CD8-positive, alpha-beta T cell (primary cell): ENCODE measurements at regions of chr17 and their contacts with region 1.

Region 1: DNA sequence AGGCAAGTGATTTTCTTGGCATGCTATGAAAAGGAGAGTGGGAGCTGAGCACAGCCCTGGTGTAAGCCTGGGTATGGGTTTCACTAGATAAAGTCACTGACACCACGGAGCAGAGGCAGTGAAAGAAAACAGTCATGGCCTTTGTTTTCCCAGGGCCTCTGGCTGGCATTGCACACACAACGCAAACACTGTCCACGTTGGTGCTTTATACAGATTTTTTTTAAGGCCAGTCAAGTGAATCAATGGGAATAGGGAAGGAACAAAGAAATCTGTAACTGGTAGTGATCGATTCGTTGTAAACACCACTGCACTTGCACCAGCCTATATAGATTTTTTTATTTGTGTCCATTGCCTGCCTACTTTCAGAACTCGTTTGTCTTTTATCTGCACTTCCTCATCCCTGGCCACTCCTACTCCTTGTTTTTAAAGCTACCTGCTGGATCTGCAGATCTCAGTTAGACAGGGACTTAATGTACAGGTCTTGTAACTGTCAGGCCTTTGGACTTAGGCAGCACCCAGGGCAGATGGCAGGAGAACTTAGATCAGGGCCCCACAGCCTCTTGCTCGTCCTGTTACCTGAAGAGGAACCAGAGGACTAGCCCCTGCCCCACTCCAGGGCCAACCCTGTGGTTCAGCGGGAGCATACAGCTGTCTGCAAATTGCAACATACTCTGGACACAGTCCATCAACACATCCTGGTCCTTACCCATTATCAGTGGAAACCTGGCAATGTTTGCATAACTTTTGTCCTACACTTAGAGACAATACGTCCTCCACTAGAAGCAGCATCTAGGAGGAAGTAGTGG is 10.6 kb upstream of the TMIGD1 start:
- DNase-seq: no peak
- ATAC-seq: no peak
- H3K4me3 ChIP-seq: no peak overlapping the region
- H3K4me3 Mint-ChIP-seq: no peak overlapping the region
- H3K27ac ChIP-seq: no peak overlapping the region
- H3K27ac Mint-ChIP-seq: no peak overlapping the region
- H3K4me1 ChIP-seq: peaks cover 8% of the 10 kb centered on the region
- H3K4me1 Mint-ChIP-seq: peaks cover 9% of the 10 kb centered on the region
- H3K27me3 ChIP-seq: no peaks in the 10 kb centered on the region
- H3K27me3 Mint-ChIP-seq: no peaks in the 10 kb centered on the region
- CTCF ChIP-seq: no peak

Region 2: GRCh38 chr17:29909236-29910003 is 435.1 kb before region 1 on chr17:
- CTCF ChIA-PET with region 1: no interaction called
- POLR2A ChIA-PET with region 1: no interaction called
- intact Hi-C with region 1: no loop called
- DNase-seq: no peak
- ATAC-seq: peak; percentile 73
- H3K4me3 ChIP-seq: no peak overlapping the region
- H3K4me3 Mint-ChIP-seq: no peak overlapping the region
- H3K27ac ChIP-seq: no peak overlapping the region
- H3K27ac Mint-ChIP-seq: no peak overlapping the region
- H3K4me1 ChIP-seq: peaks cover 4% of the 10 kb centered on the region
- H3K4me1 Mint-ChIP-seq: peaks cover 27% of the 10 kb centered on the region
- H3K27me3 ChIP-seq: no peaks in the 10 kb centered on the region
- H3K27me3 Mint-ChIP-seq: no peaks in the 10 kb centered on the region
- CTCF ChIP-seq: no peak

Region 3: GRCh38 chr17:30062372-30062771 is 282.1 kb before region 1 on chr17:
- CTCF ChIA-PET with region 1: no interaction called
- POLR2A ChIA-PET with region 1: no interaction called
- intact Hi-C with region 1: no loop called
- DNase-seq: no peak
- ATAC-seq: no peak
- H3K4me3 ChIP-seq: no peak overlapping the region
- H3K4me3 Mint-ChIP-seq: no peak overlapping the region
- H3K27ac ChIP-seq: no peak overlapping the region
- H3K27ac Mint-ChIP-seq: no peak overlapping the region
- H3K4me1 ChIP-seq: no peaks in the 10 kb centered on the region
- H3K4me1 Mint-ChIP-seq: no peaks in the 10 kb centered on the region
- H3K27me3 ChIP-seq: peaks cover 0 to 4% of the 10 kb centered on the region in 2 experiments
- H3K27me3 Mint-ChIP-seq: peaks cover 9% of the 10 kb centered on the region
- CTCF ChIP-seq: no peak

Region 4: GRCh38 chr17:30309591-30309990 is 34.9 kb before region 1 on chr17:
- CTCF ChIA-PET with region 1: no interaction called
- POLR2A ChIA-PET with region 1: no interaction called
- intact Hi-C with region 1: no loop called
- DNase-seq: no peak
- ATAC-seq: no peak
- H3K4me3 ChIP-seq: no peak overlapping the region
- H3K4me3 Mint-ChIP-seq: no peak overlapping the region
- H3K27ac ChIP-seq: no peak overlapping the region
- H3K27ac Mint-ChIP-seq: no peak overlapping the region
- H3K4me1 ChIP-seq: no peaks in the 10 kb centered on the region
- H3K4me1 Mint-ChIP-seq: no peaks in the 10 kb centered on the region
- H3K27me3 ChIP-seq: no peaks in the 10 kb centered on the region
- H3K27me3 Mint-ChIP-seq: no peaks in the 10 kb centered on the region
- CTCF ChIP-seq: no peak

Region 5: GRCh38 chr17:30323895-30324319 is 20.6 kb before region 1 on chr17:
- CTCF ChIA-PET with region 1: interaction called, 21 read pairs
- POLR2A ChIA-PET with region 1: no interaction called
- intact Hi-C with region 1: no loop called
- DNase-seq: peak in 8 of 9 experiments; percentile 12 to 66 (median 46)
- ATAC-seq: peak; percentile 63
- H3K4me3 ChIP-seq: no peak overlapping the region
- H3K4me3 Mint-ChIP-seq: peak overlapping the region; percentile 11
- H3K27ac ChIP-seq: peak overlapping the region; percentile 0 to 60
- H3K27ac Mint-ChIP-seq: peak overlapping the region; percentile 91
- H3K4me1 ChIP-seq: peaks cover 24% of the 10 kb centered on the region
- H3K4me1 Mint-ChIP-seq: peaks cover 30% of the 10 kb centered on the region
- H3K27me3 ChIP-seq: no peaks in the 10 kb centered on the region
- H3K27me3 Mint-ChIP-seq: no peaks in the 10 kb centered on the region
- CTCF ChIP-seq: no peak

Region 6: DNA sequence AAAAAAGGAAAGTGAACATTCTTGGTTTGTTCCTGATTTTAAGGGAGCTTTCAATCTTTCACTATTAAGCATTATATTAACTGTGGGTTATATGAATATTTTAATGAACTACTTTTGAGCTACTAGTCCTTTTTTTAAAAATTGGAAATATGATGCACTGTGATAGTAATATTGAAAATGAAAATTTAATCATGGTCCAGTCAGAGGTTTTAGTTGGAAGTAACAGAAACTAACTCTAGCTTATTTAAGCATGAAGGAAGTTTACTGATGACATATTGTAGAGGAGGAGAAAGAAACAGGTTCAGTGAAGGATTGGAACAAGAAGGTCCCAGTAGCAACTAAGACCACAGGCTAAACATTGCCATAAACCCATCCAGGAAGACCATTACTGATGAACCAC is 10.2 kb after region 1 on chr17:
- CTCF ChIA-PET with region 1: interaction called, 12 read pairs
- POLR2A ChIA-PET with region 1: interaction called, 3 read pairs
- intact Hi-C with region 1: no loop called
- DNase-seq: no peak
- ATAC-seq: no peak
- H3K4me3 ChIP-seq: no peak overlapping the region
- H3K4me3 Mint-ChIP-seq: no peak overlapping the region
- H3K27ac ChIP-seq: no peak overlapping the region
- H3K27ac Mint-ChIP-seq: no peak overlapping the region
- H3K4me1 ChIP-seq: no peaks in the 10 kb centered on the region
- H3K4me1 Mint-ChIP-seq: no peaks in the 10 kb centered on the region
- H3K27me3 ChIP-seq: no peaks in the 10 kb centered on the region
- H3K27me3 Mint-ChIP-seq: no peaks in the 10 kb centered on the region
- CTCF ChIP-seq: no peak

Region 7: GRCh38 chr17:30363715-30364202 is 19.3 kb after region 1 on chr17:
- CTCF ChIA-PET with region 1: interaction called, 12 read pairs
- POLR2A ChIA-PET with region 1: interaction called, 3 read pairs
- intact Hi-C with region 1: no loop called
- DNase-seq: peak; percentile 43 to 95 (median 74)
- ATAC-seq: peak; percentile 84
- H3K4me3 ChIP-seq: no peak overlapping the region
- H3K4me3 Mint-ChIP-seq: peak overlapping the region; percentile 52
- H3K27ac ChIP-seq: peak overlapping the region in 1 of 2 experiments; percentile 52
- H3K27ac Mint-ChIP-seq: peak overlapping the region; percentile 70
- H3K4me1 ChIP-seq: peaks cover 27% of the 10 kb centered on the region
- H3K4me1 Mint-ChIP-seq: peaks cover 37% of the 10 kb centered on the region
- H3K27me3 ChIP-seq: no peaks in the 10 kb centered on the region
- H3K27me3 Mint-ChIP-seq: no peaks in the 10 kb centered on the region
- CTCF ChIP-seq: no peak

Region 8: DNA sequence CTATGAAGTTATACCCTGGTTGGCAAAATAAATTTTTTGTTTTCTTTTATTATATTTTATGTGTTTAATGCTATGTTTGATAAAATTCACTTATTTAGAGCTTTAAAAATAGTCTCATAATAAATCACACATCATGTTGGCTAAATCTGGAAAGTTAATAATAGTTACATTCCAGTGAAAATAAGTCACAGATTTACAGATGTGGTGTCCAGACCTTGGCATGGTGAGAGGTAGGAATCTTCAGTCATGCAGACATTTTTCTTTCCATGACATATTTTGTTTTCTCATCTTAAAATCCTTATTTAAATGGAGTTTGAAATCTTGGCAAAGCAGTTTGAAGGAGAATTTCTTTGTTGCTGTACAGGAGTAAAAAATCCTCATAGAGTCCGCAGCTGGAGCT is 84.7 kb after region 1 on chr17:
- CTCF ChIA-PET with region 1: interaction called, 5 read pairs
- POLR2A ChIA-PET with region 1: no interaction called
- intact Hi-C with region 1: loop called in 1 of 2 experiments (anchors 10 kb)
- DNase-seq: no peak
- ATAC-seq: no peak
- H3K4me3 ChIP-seq: no peak overlapping the region
- H3K4me3 Mint-ChIP-seq: no peak overlapping the region
- H3K27ac ChIP-seq: no peak overlapping the region
- H3K27ac Mint-ChIP-seq: no peak overlapping the region
- H3K4me1 ChIP-seq: no peaks in the 10 kb centered on the region
- H3K4me1 Mint-ChIP-seq: no peaks in the 10 kb centered on the region
- H3K27me3 ChIP-seq: no peaks in the 10 kb centered on the region
- H3K27me3 Mint-ChIP-seq: no peaks in the 10 kb centered on the region
- CTCF ChIP-seq: no peak

Region 9: DNA sequence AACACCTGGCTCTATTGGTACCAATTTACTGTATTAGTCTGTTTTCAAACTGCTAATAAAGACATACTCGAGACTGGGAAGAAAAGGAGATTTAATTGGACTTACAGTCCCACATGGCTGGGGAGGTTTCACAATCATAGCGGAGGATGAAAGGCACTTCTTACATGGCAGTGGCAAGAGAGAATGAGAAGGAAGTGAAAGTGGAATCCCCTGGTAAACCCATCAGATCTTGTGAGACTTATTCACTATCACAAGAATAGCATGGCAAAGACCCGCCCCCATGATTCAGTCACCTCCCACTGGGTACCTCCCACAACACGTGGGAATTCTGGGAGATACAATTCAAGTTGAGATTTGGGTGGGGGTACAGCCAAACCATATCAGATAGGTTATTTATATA is 110.1 kb after region 1 on chr17:
- CTCF ChIA-PET with region 1: no interaction called
- POLR2A ChIA-PET with region 1: no interaction called
- intact Hi-C with region 1: no loop called
- DNase-seq: no peak
- ATAC-seq: no peak
- H3K4me3 ChIP-seq: no peak overlapping the region
- H3K4me3 Mint-ChIP-seq: no peak overlapping the region
- H3K27ac ChIP-seq: no peak overlapping the region
- H3K27ac Mint-ChIP-seq: no peak overlapping the region
- H3K4me1 ChIP-seq: no peaks in the 10 kb centered on the region
- H3K4me1 Mint-ChIP-seq: no peaks in the 10 kb centered on the region
- H3K27me3 ChIP-seq: no peaks in the 10 kb centered on the region
- H3K27me3 Mint-ChIP-seq: no peaks in the 10 kb centered on the region
- CTCF ChIP-seq: no peak